ENCODE measurements at regions of chr14 and their contacts with region 1.

Region 1: GRCh38 chr14:39114073-39114838 is at the start of gene GEMIN2:
- DNase-seq: peak; percentile 91 to 96 (median 93)
- H3K4me3 ChIP-seq: peak within 1 kb of the TSS; percentile 31 to 66 (median 46)
- H3K27ac ChIP-seq: peak within 1 kb of the TSS; percentile 3 to 76 (median 67)
- H3K4me1 ChIP-seq: peaks cover 0 to 17% of the 10 kb centered on the region in 2 donors
- H3K27me3 ChIP-seq: no peaks in the 10 kb centered on the region
- CTCF ChIP-seq: no peak
- POLR2A ChIP-seq: peak in 1 of 2 donors; percentile 47
- total RNA-seq, gene GEMIN2: 1.1 to 21.2 (median 10.6) TPM

Region 2: GRCh38 chr14:39169541-39169900 is 55.3 kb after region 1 on chr14:
- intact Hi-C with region 1: loop called (anchors 10 kb)
- DNase-seq: peak in 3 of 7 donors; percentile 22 to 30 (median 23)
- H3K4me3 ChIP-seq: peak overlapping the region; percentile 0 to 96 (median 74)
- H3K27ac ChIP-seq: peak overlapping the region; percentile 78 to 100 (median 98)
- H3K4me1 ChIP-seq: peaks cover 23 to 45% of the 10 kb centered on the region in 2 donors
- H3K27me3 ChIP-seq: no peaks in the 10 kb centered on the region
- CTCF ChIP-seq: no peak
- POLR2A ChIP-seq: no peak

Measured in adrenal gland (tissue), 19 donors.